ENCODE measurements at regions of chr3 and their contacts with region 1.

Region 1: GRCh38 chr3:47250309-47251060 is 32.1 kb downstream of the KIF9 start:
- DNase-seq: peak; percentile 43 to 60
- H3K4me3 ChIP-seq: no peak overlapping the region
- H3K4me1 ChIP-seq: peaks cover 12% of the 10 kb centered on the region
- H3K27me3 ChIP-seq: no peaks in the 10 kb centered on the region

Region 2: DNA sequence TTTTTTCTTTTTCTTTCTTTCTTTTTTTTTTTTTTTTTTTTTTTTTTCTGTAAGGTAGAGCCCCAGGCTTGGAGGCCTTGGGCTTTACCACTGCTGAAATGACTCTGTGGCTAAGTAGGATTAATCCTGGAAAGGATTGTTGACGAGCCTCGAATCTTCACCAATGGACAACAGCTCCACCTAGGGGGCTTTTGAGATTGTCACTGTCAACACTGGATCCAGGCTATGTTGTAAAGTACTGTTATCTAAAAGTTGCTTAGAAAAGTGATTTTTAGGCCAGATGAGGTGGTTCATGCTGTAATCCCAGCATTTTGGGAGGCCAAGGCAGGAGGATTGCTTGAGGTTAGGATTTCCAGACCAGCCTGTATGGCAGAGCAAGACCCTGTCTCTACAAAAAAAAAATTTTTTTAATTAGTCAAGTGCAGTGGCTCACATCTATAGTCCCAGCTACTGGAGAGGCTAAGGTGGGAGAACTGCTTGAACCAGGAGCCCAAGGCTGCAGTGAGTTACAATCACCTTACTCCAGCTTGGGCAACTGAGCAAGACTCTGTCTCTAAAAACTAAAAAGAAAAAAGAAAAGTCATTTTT is 73.9 kb after region 1 on chr3:
- in situ Hi-C with region 1: loop called (anchors 10 kb)
- DNase-seq: peak; percentile 81 to 82
- H3K4me3 ChIP-seq: no peak overlapping the region
- H3K4me1 ChIP-seq: no peaks in the 10 kb centered on the region
- H3K27me3 ChIP-seq: no peaks in the 10 kb centered on the region